ENCODE measurements at regions of chr16 and their contacts with region 1.

Region 1: GRCh38 chr16:24041826-24042631 is 206.2 kb downstream of the PRKCB start:
- DNase-seq: peak; percentile 44
- H3K4me3 ChIP-seq: no peak overlapping the region
- H3K27ac ChIP-seq: no peak overlapping the region
- H3K4me1 ChIP-seq: no peaks in the 10 kb centered on the region
- H3K27me3 ChIP-seq: no peaks in the 10 kb centered on the region
- CTCF ChIP-seq: peak in 3 of 4 experiments; percentile 52 to 72 (median 71)
- POLR2A ChIP-seq: no peak

Region 2: DNA sequence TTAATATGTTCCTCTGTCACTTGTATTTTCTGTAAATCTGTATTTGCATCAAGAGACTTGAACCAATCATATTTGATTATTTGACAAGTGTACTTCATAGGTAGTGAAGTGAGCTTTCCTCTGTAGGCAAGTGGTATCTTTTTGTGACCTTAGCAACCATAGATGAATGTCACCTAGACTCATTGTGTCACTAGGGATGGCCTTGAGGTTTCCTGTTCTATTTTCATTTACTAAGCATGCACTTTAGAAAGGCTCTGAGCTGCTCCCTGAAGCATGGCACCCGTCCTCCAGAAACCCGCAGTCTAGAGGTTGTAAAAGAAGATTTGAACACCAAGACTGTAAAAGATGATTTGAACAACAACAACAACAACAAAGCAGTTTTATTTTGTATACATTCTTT is 54.6 kb before region 1 on chr16:
- intact Hi-C with region 1: no loop called
- DNase-seq: no peak
- H3K4me3 ChIP-seq: no peak overlapping the region
- H3K27ac ChIP-seq: no peak overlapping the region
- H3K4me1 ChIP-seq: no peaks in the 10 kb centered on the region
- H3K27me3 ChIP-seq: no peaks in the 10 kb centered on the region
- CTCF ChIP-seq: no peak
- POLR2A ChIP-seq: no peak

Region 3: GRCh38 chr16:24018485-24018884 is 23.5 kb before region 1 on chr16:
- intact Hi-C with region 1: no loop called
- DNase-seq: no peak
- H3K4me3 ChIP-seq: no peak overlapping the region
- H3K27ac ChIP-seq: no peak overlapping the region
- H3K4me1 ChIP-seq: no peaks in the 10 kb centered on the region
- H3K27me3 ChIP-seq: no peaks in the 10 kb centered on the region
- CTCF ChIP-seq: no peak
- POLR2A ChIP-seq: no peak

Region 4: GRCh38 chr16:24253192-24253591 is 211.2 kb after region 1 on chr16:
- intact Hi-C with region 1: loop called (anchors 10 kb)
- DNase-seq: no peak
- H3K4me3 ChIP-seq: no peak overlapping the region
- H3K27ac ChIP-seq: no peak overlapping the region
- H3K4me1 ChIP-seq: no peaks in the 10 kb centered on the region
- H3K27me3 ChIP-seq: peaks cover 4% of the 10 kb centered on the region
- CTCF ChIP-seq: peak in 3 of 4 experiments; percentile 42 to 49 (median 43)
- POLR2A ChIP-seq: no peak

Region 5: DNA sequence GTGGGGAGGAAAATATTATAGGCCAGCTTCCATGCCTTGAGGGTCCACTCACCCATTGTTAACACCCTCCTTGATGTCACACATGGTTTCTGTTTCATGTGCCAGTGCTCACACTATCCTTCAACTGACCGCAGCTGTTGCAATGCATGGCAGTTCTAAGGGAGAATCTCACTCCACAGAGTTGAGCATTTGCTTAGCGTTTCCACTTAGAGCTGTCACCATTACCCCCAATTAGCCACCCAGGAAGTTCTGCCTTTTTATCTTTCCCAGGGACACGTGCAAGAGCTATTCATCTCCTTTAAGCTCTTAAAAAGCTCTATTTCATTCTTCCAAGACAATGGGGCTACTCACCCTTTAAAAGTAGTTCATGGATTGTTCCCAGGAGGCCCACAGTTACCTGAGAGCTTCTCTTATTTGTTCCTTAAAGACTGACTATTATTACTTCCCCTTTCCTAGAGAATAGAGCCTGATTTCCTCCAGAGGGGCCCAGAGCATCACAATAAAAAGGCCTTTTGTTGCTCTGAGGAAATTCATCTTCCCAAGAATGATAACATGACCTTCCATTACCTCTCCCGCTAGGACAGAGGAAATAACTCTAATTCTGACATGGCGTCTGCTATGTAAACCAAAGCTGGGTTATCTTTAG is 340.9 kb after region 1 on chr16:
- intact Hi-C with region 1: no loop called
- DNase-seq: no peak
- H3K4me3 ChIP-seq: no peak overlapping the region
- H3K27ac ChIP-seq: no peak overlapping the region
- H3K4me1 ChIP-seq: no peaks in the 10 kb centered on the region
- H3K27me3 ChIP-seq: no peaks in the 10 kb centered on the region
- CTCF ChIP-seq: no peak
- POLR2A ChIP-seq: no peak

Region 6: DNA sequence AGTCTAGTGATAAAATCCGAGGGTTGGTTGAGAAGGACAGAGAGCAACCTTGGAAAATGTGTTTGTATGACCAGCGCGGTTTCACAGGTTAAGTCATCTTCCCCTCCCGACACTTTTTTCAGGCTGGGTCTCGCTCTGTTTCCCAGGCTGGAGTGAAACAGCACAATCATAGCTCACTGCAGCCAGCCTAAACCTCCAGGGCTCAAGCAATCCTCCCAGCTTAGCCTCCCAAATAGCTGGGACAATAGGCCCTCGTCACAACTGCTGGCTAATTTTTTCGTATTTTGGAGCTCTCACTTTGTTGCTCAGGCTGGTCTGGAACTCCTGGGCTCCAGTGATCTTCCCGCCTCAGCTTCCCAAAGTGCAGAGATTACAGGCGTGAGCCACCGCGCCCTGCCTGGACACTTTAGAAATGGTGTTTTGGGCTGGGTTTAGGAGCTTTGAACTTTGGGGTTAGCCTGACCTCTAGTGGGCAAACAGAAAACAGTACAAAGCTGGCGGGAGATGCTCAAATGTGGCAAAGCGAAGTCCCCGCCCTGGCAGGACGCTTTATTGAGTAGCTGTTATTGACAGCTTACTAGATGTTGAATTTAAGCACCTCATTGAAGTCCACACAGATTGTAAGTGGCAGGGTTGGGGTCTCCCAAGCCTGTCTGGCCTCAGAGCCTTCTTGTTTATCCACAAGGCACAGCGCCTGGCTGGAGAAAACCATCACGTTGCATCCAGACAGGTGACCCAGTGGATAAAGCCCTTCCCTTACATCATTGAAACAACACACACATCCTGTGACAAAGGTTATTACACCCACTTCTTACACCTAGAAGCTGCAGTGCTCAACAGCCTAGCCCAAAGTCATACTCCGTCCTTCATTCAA is 462.7 kb after region 1 on chr16:
- intact Hi-C with region 1: loop called (anchors 5 kb)
- DNase-seq: peak; percentile 22
- H3K4me3 ChIP-seq: no peak overlapping the region
- H3K27ac ChIP-seq: no peak overlapping the region
- H3K4me1 ChIP-seq: no peaks in the 10 kb centered on the region
- H3K27me3 ChIP-seq: no peaks in the 10 kb centered on the region
- CTCF ChIP-seq: peak in 3 of 4 experiments; percentile 54 to 64 (median 57)
- POLR2A ChIP-seq: no peak

Measured in prostate gland (tissue), 2 donors.